A673 (cell line): ENCODE measurements at regions of chr1 and their contacts with region 1.

Region 1: DNA sequence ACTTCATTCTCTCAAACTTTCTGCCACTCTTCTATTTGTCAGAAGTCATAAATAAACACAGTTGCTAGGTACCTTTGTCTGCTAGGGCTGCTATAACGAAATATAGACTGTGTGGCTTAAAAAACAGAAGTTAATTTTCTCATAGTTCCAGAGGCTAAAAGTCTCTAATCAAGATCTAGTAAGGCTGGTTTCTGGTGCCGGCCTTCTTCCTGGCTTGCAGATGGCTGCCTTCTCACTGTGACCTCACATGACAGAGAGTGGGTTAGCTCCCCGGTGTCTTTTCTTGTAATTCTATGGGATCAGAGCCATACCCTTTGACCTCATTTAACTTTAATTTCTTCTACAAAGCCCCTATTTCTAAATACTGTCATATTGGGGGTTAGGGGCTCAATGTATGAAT is 5.9 kb downstream of the PDC start:
- DNase-seq: no peak
- H3K4me3 ChIP-seq: no peak overlapping the region
- H3K27ac ChIP-seq: no peak overlapping the region
- H3K4me1 ChIP-seq: peaks cover 14% of the 10 kb centered on the region
- H3K27me3 ChIP-seq: no peaks in the 10 kb centered on the region
- CTCF ChIP-seq: no peak

Region 2: DNA sequence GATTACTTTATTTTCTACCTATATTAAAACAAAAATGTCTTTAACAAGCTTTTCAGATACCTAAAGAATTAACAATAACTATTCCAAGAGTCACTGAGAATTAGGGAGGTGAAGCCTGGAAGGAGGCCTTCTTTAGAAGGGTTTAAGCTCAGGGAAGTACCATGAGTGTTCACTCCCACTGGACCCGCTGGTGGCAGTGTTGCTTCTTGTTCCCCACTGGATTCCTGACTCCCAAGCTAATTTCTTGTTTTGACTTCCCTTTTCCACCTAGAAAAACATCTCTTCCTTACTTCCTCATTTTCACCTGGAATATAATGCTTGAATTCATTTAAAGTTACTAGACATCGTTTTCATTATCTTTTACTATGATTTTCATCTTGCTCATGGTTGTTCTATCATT is 456.6 kb before region 1 on chr1:
- CTCF ChIA-PET with region 1: no interaction called
- POLR2A ChIA-PET with region 1: no interaction called
- intact Hi-C with region 1: no loop called
- DNase-seq: peak; percentile 17
- H3K4me3 ChIP-seq: no peak overlapping the region
- H3K27ac ChIP-seq: no peak overlapping the region
- H3K4me1 ChIP-seq: peaks cover 20% of the 10 kb centered on the region
- H3K27me3 ChIP-seq: no peaks in the 10 kb centered on the region
- CTCF ChIP-seq: peak; percentile 30; the same call in 1 of the 2 replicates

Region 3: DNA sequence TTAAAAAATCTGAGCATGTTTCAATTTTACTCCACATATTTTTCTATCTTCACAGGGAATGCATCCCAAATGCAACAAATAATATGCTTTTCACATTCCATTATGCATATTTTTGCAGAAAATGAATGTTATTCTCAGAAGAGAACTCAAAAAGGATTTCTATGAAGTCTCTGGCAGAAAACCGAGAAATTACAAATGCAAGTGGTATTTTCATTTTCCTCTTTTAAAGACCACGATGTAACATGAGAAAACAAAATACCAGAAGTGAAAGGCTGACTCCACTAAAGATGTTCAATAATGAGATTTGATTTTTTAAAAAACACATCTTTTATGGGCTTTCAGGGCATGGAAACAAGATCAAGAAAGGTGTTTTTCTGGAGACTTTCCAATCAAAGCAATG is 11.0 kb after region 1 on chr1:
- CTCF ChIA-PET with region 1: no interaction called
- POLR2A ChIA-PET with region 1: interaction called, 14 read pairs
- intact Hi-C with region 1: no loop called
- DNase-seq: no peak
- H3K4me3 ChIP-seq: no peak overlapping the region
- H3K27ac ChIP-seq: no peak overlapping the region
- H3K4me1 ChIP-seq: peaks cover 4% of the 10 kb centered on the region
- H3K27me3 ChIP-seq: no peaks in the 10 kb centered on the region
- CTCF ChIP-seq: no peak

Region 4: DNA sequence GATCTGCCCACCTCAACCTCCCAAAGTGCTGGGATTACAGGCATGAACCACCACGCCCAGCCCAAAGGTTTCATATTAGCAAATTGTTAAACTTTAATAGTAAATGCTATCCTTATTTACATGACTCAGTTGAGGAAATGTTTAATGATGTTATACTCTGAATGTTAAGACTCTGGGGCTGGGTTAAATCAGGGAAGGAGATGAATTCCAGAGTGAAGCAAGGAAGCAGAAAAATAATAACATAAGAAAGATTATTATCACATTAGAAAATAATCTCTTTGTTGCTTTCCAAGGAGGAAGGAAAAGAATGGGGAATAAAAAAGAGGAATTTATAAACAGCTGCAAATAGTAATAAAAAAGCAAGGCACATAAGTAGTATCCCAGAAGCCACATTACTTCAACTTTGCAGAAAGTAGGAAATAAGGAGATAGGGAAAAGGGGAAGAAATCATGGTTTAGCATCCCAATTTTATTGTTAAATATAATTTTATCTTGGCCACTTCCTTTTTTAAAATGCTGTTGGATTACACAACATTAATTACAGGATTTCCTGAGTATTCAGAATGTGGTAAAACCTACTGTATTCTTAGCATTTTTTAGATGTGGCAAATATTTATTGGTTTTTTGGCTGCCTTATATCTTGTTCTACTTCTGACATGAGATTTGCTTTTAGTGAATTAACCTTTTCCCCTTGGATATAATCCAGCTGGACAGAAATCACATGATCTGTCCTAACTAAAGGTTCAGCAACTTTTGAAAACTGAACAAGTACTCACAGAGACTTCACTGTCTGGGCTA is 120.2 kb after region 1 on chr1:
- CTCF ChIA-PET with region 1: no interaction called
- POLR2A ChIA-PET with region 1: no interaction called
- intact Hi-C with region 1: no loop called
- DNase-seq: peak; percentile 93
- H3K4me3 ChIP-seq: no peak overlapping the region
- H3K27ac ChIP-seq: peak overlapping the region; percentile 73
- H3K4me1 ChIP-seq: peaks cover 45% of the 10 kb centered on the region
- H3K27me3 ChIP-seq: no peaks in the 10 kb centered on the region
- CTCF ChIP-seq: no peak